Stomach (tissue), 19 donors: ENCODE measurements at regions of chr1 and their contacts with region 1.

Region 1: DNA sequence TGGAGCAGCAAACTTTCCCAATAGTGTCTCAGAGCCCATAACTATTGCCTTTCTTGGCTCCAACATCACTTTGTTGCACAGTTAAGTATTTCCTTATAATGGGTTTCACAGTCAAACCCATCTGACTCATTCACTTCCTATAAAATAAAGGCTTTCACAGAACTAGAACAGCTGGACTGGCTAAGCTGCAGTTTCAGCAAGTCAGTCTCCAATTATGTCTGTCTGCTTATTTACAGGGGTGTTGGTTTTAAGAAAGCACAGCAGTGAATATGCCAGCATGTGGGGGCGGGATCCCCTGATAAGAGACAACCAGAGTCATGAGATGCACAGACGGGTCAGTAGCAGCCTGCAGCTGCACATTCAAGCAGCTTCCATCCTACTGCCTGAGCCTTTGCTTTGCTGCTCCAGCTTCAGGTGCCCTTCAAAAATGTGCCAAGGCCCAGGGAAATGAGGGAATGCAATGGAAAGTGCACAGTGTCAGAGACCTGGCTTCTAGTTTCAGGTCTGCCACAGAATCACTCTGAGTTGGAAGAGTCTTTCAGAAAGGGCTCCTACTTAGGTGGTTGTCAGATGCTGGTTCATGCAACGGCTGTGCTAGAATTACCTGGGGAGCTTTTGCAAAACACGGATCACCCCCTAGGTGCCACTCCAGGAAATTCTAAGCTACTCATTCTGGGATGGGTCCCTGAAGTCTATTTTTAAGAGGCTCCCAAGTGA is 24.8 kb downstream of the RNF19B start:
- DNase-seq: peak in 1 of 2 donors; percentile 33
- H3K4me3 ChIP-seq: no peak overlapping the region
- H3K27ac ChIP-seq: peak overlapping the region in 3 of 5 donors; percentile 13 to 63 (median 20)
- H3K4me1 ChIP-seq: peaks cover 6 to 22% (median 9%) of the 10 kb centered on the region in 4 donors
- H3K27me3 ChIP-seq: no peaks in the 10 kb centered on the region
- CTCF ChIP-seq: no peak
- EP300 ChIP-seq: no peak
- POLR2A ChIP-seq: no peak

Region 2: GRCh38 chr1:32639489-32640075 is 300.2 kb before region 1 on chr1:
- intact Hi-C with region 1: no loop called
- DNase-seq: no peak
- H3K4me3 ChIP-seq: no peak overlapping the region
- H3K27ac ChIP-seq: no peak overlapping the region
- H3K4me1 ChIP-seq: peaks cover 0 to 16% (median 3%) of the 10 kb centered on the region in 4 donors
- H3K27me3 ChIP-seq: no peaks in the 10 kb centered on the region
- CTCF ChIP-seq: no peak
- EP300 ChIP-seq: no peak
- POLR2A ChIP-seq: no peak

Region 3: DNA sequence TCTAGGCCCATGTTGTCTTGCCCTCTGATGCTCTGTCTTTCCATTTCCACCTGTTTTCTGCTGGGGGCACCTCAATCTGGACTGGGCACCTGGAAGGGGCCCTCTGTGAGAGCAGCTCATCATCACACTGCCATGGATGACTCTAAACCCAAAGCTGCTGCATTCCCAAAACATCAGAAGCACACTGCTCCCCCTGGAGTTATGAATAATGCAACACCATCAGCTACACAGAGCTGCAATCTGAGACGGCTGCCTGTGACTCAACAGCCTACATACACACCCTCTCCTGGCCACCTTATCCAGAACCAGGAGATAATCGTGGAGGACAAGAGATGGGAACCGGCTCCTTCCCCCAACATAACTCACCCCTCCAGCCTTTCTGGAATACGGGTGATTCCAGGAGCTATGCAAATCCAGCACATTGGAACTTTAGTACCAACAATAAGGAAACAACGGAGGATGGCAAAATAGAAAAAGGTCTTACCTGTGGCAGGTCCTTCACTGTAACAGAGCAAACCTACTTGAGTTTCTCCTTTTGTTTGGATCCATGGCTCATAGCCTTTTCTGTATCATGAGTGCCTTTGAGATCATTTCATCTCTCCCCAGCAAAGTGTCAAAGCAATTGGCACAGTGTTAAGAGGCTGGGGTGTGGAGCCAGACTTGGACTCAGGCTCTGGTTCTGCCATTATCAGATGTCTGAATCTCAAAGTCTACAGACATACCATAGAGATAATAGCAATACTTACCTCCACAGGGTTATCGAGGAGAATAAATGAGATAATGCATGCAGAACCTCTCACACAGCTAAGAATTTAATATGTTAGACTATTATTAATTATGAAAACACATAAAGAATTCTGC is 67.6 kb after region 1 on chr1:
- intact Hi-C with region 1: loop called (anchors 10 kb)
- DNase-seq: peak; percentile 56 to 81
- H3K4me3 ChIP-seq: no peak overlapping the region
- H3K27ac ChIP-seq: peak overlapping the region; percentile 53 to 84 (median 77)
- H3K4me1 ChIP-seq: peaks cover 58 to 80% (median 67%) of the 10 kb centered on the region in 4 donors
- H3K27me3 ChIP-seq: no peaks in the 10 kb centered on the region
- CTCF ChIP-seq: peak in 3 of 7 experiments; percentile 23 to 41 (median 27)
- EP300 ChIP-seq: no peak
- POLR2A ChIP-seq: no peak

Region 4: DNA sequence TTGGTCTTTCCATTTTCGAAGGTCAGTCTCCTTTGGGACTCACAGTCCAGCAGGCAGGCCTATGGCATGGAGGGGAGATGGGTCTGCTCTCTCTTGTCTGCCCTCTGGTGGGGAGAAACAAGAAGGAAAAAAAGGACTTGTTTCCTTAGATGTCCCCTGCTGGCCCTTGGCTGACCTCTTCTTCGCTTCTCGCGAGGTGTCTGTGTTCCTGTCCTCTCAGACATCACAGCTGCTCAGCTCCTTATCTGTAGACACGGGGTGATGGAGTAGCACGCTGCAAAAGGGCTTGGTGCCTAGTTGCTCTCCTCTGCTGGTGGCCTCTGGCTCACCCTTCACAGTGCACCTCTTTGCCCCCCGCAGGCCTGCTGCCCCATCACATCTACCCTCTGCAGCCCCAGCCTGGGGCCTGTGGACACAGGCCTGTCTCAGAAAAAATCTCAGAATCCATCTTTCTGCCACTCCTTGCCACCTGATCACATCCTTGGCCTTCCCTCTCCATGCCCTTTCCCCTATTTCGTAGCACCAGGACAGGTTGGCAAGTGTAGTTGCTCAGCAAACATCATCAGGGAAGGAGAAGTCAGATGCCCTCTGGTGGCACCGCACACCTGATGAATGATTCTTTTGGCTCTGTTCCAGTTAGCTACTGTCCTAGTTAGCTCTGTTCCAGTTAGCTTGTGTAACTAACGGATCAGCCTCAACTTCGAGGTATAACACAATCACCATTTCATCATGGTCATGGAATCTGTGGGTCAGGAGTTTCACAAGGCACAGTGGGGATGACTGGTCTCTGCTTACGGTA is 115.6 kb after region 1 on chr1:
- intact Hi-C with region 1: loop called (anchors 10 kb)
- DNase-seq: peak; percentile 59 to 92
- H3K4me3 ChIP-seq: no peak overlapping the region
- H3K27ac ChIP-seq: peak overlapping the region in 1 of 5 donors; percentile 54
- H3K4me1 ChIP-seq: peaks cover 6 to 15% (median 7%) of the 10 kb centered on the region in 4 donors
- H3K27me3 ChIP-seq: no peaks in the 10 kb centered on the region
- CTCF ChIP-seq: peak in 5 of 7 experiments; percentile 47 to 69 (median 54)
- EP300 ChIP-seq: no peak
- POLR2A ChIP-seq: no peak